A549 (cell line): ENCODE measurements at regions of chr11 and their contacts with region 1.

Region 1: GRCh38 chr11:73242251-73243079 is 24.4 kb downstream of the P2RY2 start:
- DNase-seq: peak; percentile 76 to 90
- ATAC-seq: peak; percentile 86 to 93
- H3K4me3 ChIP-seq: no peak overlapping the region
- H3K27ac ChIP-seq: peak overlapping the region; percentile 69 to 92
- H3K4me1 ChIP-seq: peaks cover 22% of the 10 kb centered on the region; the same call in 2 of the 3 replicates
- CTCF ChIP-seq: peak; percentile 94
- EP300 ChIP-seq: no peak
- POLR2A ChIP-seq: no peak
- RAD21 ChIP-seq: peak; percentile 92 to 93

Region 2: GRCh38 chr11:73205661-73206343 is 36.7 kb before region 1 on chr11:
- CTCF ChIA-PET with region 1: interaction called, 25 read pairs
- POLR2A ChIA-PET with region 1: no interaction called
- DNase-seq: no peak
- ATAC-seq: peak; percentile 34 to 49; a peak in 3 of 6 replicates
- H3K4me3 ChIP-seq: no peak overlapping the region
- H3K27ac ChIP-seq: peak overlapping the region in 1 of 2 experiments; percentile 59; a peak in 2 of 6 replicates
- H3K4me1 ChIP-seq: peaks cover 27% of the 10 kb centered on the region
- CTCF ChIP-seq: no peak
- EP300 ChIP-seq: no peak
- POLR2A ChIP-seq: no peak
- RAD21 ChIP-seq: no peak

Region 3: DNA sequence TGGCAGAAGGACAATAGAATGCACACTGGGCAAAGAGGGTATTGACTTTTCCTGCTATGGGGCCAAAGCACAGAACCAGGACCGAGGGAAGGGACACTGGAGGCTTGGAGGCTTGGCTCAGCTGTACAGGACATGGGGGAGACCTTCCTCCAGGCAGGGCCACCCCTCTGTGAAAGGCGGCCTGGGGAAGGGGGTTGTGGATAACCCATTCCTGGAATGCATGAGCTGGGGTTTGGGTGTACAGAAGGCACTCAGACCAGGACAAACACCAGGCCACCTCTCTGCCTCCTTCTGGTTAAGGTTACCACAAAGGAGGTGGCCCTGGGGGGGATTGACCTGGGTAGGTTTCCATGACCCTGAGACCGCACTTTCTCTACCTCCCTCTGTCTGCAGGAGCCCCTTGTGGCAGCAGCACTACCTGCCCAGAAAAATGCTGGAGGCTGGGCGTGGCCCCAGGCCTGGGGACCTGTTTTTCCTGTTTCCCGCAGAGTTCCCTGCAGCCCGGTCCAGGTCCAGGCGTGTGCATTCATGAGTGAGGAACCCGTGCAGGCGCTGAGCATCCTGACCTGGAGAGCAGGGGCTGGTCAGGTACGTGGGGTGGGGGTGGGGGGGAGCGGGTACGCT is 14.8 kb before region 1 on chr11:
- CTCF ChIA-PET with region 1: interaction called, 45 read pairs
- POLR2A ChIA-PET with region 1: no interaction called
- DNase-seq: no peak
- ATAC-seq: no peak
- H3K4me3 ChIP-seq: no peak overlapping the region
- H3K27ac ChIP-seq: no peak overlapping the region
- H3K4me1 ChIP-seq: no peaks in the 10 kb centered on the region
- CTCF ChIP-seq: no peak
- EP300 ChIP-seq: no peak
- POLR2A ChIP-seq: no peak
- RAD21 ChIP-seq: no peak

Region 4: DNA sequence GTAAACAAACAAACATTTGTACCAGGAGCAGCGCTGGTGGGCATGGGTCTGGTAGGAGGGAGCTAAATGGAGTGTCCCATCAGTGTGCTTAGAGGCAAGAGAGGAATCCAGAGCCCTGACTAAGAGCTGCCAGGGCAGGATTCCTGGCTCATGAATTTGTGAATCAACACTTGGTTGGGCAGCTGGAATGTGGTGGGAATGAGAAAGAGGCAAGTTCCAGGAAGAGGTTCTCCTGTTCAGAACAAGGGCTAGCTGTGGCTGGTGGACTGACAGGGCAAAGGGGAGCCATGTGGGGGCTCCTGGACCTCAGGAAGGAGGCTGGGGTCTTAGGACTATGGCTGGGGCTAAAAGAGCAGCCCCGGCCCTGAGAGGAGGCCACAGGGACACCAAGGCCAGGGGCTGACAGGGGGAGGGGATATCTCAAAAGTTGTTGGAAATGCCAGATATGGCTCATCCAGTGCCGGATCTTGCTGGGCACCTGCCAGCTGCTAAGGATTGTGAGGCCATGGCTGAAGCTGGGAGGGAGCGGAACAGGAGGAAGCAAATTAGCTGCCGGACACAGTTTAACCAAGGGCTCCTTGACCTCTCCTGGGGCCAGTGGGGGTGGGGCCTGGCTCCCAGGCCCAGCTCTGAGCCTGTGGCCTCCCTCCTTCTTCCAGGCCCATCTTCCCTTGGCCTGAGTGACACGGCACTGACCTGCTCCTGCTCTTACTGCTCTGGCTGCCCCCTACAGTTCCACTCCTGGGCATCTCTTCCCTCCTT is 15.1 kb after region 1 on chr11:
- CTCF ChIA-PET with region 1: interaction called, 46 read pairs
- POLR2A ChIA-PET with region 1: interaction called, 4 read pairs
- DNase-seq: peak in 1 of 2 experiments; percentile 77
- ATAC-seq: peak; percentile 66 to 90
- H3K4me3 ChIP-seq: no peak overlapping the region
- H3K27ac ChIP-seq: peak overlapping the region; percentile 51 to 85
- H3K4me1 ChIP-seq: peaks cover 17% of the 10 kb centered on the region
- CTCF ChIP-seq: no peak
- EP300 ChIP-seq: no peak
- POLR2A ChIP-seq: no peak
- RAD21 ChIP-seq: no peak

Region 5: GRCh38 chr11:73262851-73263495 is 20.5 kb after region 1 on chr11:
- CTCF ChIA-PET with region 1: interaction called, 46 read pairs
- POLR2A ChIA-PET with region 1: no interaction called
- DNase-seq: peak in 1 of 2 experiments; percentile 48
- ATAC-seq: peak; percentile 26 to 68; a peak in 3 of 6 replicates
- H3K4me3 ChIP-seq: no peak overlapping the region
- H3K27ac ChIP-seq: peak overlapping the region in 1 of 2 experiments; percentile 7; a peak in 1 of 6 replicates
- H3K4me1 ChIP-seq: peaks cover 14% of the 10 kb centered on the region
- CTCF ChIP-seq: no peak
- EP300 ChIP-seq: no peak
- POLR2A ChIP-seq: no peak
- RAD21 ChIP-seq: no peak